ENCODE measurements at regions of chr3 and their contacts with region 1.

Region 1: DNA sequence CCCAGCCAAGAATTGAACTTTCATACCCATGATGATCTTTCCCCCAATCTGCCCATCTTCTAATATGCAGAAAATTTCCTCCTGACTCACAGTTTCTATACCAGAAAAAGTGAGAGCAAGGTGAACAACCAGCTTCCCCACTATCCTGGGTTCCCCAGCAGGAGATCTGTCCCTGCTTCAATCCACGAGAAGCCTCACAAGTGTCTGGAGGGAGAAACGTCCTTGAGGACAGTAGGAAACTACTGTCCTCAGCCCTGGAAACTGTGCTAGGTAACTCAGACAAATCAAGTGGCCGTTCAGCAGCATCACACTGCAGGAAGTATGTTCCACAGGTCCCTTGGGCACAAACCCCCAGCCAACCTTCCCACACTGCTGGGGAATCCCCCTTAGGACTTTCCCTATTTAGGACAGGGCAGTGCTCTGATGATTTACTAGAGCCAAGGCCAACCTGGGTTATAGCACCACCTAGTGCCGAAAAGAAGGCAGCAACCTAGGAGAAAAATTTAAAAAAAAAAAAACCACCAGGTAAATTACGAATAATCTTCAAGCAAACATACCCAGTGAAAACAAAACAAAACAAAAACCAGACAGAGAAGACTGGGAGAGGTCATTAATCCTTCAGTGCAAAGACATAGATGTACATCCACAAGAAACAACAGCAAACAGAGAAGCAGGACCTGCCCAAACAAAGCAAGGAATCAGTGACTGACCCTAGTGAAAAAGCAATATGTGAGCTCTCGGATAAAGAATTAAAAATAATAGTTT is 36.0 kb downstream of the MORC1 start:
- DNase-seq: no peak
- ATAC-seq: peak; percentile 31

Region 2: GRCh38 chr3:108079877-108080659 is 1001.9 kb before region 1 on chr3:
- intact Hi-C with region 1: no loop called
- DNase-seq: no peak
- ATAC-seq: no peak

Region 3: GRCh38 chr3:109033000-109033660 is 48.8 kb before region 1 on chr3:
- intact Hi-C with region 1: loop called (anchors 10 kb)
- DNase-seq: no peak
- ATAC-seq: no peak